Heart right ventricle (tissue), 16 donors: ENCODE measurements at regions of chr4 and their contacts with region 1.

Region 1: GRCh38 chr4:142846729-142847596 is 862 bp upstream of the INPP4B start:
- DNase-seq: peak; percentile 33 to 45
- ATAC-seq: peak; percentile 57 to 84 (median 78)
- H3K4me3 ChIP-seq: peak overlapping the region; percentile 57 to 79 (median 66)
- H3K27ac ChIP-seq: peak overlapping the region; percentile 57 to 93 (median 82)
- H3K4me1 ChIP-seq: peaks cover 0 to 30% (median 10%) of the 10 kb centered on the region in 9 donors
- H3K27me3 ChIP-seq: peaks cover 0 to 55% (median 15%) of the 10 kb centered on the region in 7 donors
- CTCF ChIP-seq: peak in 7 of 9 donors; percentile 33 to 56 (median 50)

Region 2: DNA sequence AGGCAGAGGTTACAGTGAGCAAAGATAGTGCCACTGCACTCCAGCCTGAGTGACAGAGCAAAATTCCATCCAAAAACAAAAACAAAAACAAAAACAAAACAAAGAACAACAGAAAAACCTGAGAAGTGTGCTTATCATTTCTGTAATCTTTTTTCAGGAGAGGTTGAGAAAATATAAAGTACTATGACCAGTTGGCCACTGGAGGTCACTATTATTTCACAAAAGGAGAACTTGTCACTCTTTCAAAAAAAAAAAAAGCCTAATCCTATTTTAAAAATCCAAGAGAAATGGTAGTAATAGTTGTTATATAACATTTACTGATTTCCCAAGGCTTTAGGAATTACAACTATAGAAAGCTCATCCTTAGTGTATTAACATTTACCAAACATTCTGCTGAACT is 1688.7 kb before region 1 on chr4:
- intact Hi-C with region 1: loop called in 3 of 10 experiments (anchors 5 to 10 kb)
- DNase-seq: no peak
- ATAC-seq: peak in 1 of 8 donors; percentile 49
- H3K4me3 ChIP-seq: no peak overlapping the region
- H3K27ac ChIP-seq: no peak overlapping the region
- H3K4me1 ChIP-seq: peaks cover 0 to 13% (median 5%) of the 10 kb centered on the region in 9 donors
- H3K27me3 ChIP-seq: peaks cover 0 to 3% (median 0%) of the 10 kb centered on the region in 7 donors
- CTCF ChIP-seq: peak in 8 of 9 donors; percentile 44 to 69 (median 56)

Region 3: DNA sequence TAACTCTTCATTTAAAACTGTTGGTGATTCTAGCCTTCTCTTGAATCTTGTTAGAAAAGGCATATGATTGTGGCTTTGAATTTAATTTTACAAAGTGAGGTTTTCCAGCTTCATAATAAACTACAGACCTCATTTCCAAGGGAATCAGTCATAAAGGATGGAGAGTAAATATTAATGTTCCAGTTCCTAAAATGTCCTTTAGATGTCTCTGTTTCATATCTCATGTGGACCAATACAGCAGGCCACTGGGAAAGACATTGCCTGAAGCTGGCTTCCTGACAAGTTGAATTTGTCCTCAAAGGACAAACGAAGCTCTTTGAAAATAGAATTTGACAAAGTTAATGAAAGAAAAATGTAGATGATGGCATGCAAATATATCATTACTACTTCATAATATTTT is 1500.8 kb before region 1 on chr4:
- intact Hi-C with region 1: loop called in 1 of 10 experiments (anchors 10 kb)
- DNase-seq: no peak
- ATAC-seq: peak in 7 of 8 donors; percentile 59 to 86 (median 82)
- H3K4me3 ChIP-seq: no peak overlapping the region
- H3K27ac ChIP-seq: no peak overlapping the region
- H3K4me1 ChIP-seq: peaks cover 0 to 24% (median 0%) of the 10 kb centered on the region in 9 donors
- H3K27me3 ChIP-seq: no peaks in the 10 kb centered on the region
- CTCF ChIP-seq: peak; percentile 39 to 74 (median 64)

Region 4: DNA sequence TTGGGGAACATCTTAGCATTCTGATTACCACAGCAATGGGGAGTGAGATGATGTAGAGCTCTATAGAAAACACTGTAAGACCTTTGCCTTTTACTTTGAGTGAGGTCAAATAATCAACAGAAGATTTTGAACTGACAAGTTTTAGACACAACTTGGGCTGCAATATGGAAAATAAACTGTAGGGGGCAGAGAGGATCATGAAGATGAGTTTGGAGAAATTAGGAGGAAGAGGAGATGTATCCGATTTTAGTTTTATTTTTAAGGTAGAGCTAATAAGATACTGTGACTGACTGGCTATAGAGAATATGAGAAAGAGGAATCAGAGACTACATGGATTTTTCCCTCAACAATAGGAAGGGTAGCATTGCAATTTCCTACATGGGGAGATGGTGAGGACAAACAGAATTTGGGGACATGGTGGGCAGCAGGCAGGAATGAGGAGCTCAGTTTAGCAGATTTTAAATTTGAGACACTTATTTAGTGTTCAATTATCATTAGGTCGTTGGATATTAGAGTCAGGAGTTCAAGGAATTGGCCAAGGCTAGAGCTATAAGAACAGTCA is 564.0 kb before region 1 on chr4:
- intact Hi-C with region 1: loop called in 1 of 10 experiments (anchors 10 kb)
- DNase-seq: no peak
- ATAC-seq: no peak
- H3K4me3 ChIP-seq: no peak overlapping the region
- H3K27ac ChIP-seq: no peak overlapping the region
- H3K4me1 ChIP-seq: peaks cover 0 to 13% (median 0%) of the 10 kb centered on the region in 9 donors
- H3K27me3 ChIP-seq: no peaks in the 10 kb centered on the region
- CTCF ChIP-seq: peak; percentile 11 to 65 (median 54)

Region 5: DNA sequence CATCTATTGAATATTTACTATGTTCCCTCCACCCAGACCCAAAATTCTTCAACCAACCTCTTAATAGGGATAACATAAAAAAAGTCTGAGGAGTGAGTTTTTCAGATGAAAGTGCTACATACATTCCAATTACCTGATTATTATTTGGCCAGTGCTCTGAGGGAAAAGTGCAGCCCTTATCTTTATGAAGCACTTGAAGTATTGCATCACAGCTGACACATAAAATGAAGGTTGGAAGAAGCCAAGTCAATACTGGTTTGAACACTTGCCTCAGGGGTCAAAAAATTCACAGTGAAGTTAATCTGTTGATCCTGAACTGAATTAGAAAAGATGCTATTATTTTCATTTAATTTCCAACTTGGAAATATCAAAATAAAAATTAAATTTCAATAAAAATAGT is 499.7 kb before region 1 on chr4:
- intact Hi-C with region 1: loop called in 5 of 10 experiments (anchors 5 to 10 kb)
- DNase-seq: no peak
- ATAC-seq: peak in 5 of 8 donors; percentile 54 to 76 (median 74)
- H3K4me3 ChIP-seq: no peak overlapping the region
- H3K27ac ChIP-seq: peak overlapping the region in 4 of 10 donors; percentile 10 to 68 (median 44)
- H3K4me1 ChIP-seq: peaks cover 2 to 64% (median 44%) of the 10 kb centered on the region in 9 donors
- H3K27me3 ChIP-seq: no peaks in the 10 kb centered on the region
- CTCF ChIP-seq: no peak

Region 6: DNA sequence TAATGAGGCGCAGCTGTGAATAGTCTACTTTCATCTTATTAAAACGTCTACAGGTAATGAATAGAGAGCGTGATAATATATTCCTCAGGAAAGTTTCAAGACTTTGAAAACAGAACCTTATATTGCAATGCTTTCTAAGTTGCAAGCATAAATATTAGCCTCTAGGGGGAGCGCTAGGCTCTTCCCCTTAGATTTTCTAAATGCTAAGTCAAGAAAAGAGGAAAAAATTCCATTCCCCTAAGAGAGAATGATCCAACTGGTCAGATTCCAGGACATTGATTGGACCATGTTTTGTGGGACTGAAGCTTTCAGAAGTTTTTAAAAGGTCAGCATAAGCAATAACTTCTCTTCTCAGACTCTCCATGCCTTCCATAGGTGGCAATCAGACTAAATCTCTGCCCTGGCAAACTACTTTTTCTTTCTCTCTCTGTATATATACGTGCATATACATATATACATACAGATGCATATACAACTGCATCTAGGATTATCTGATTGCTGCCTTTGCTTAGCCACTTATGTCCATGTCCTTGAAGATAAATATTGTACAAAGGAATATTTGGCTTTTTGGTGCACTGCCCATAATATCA is 493.7 kb before region 1 on chr4:
- intact Hi-C with region 1: loop called in 5 of 10 experiments (anchors 5 to 10 kb)
- DNase-seq: peak in 1 of 2 donors; percentile 26
- ATAC-seq: peak in 7 of 8 donors; percentile 36 to 69 (median 48)
- H3K4me3 ChIP-seq: no peak overlapping the region
- H3K27ac ChIP-seq: peak overlapping the region in 6 of 10 donors; percentile 21 to 68 (median 34)
- H3K4me1 ChIP-seq: peaks cover 2 to 80% (median 67%) of the 10 kb centered on the region in 9 donors
- H3K27me3 ChIP-seq: no peaks in the 10 kb centered on the region
- CTCF ChIP-seq: peak; percentile 84 to 96 (median 90)

Region 7: GRCh38 chr4:142883040-142883832 is 36.3 kb after region 1 on chr4:
- intact Hi-C with region 1: no loop called
- DNase-seq: no peak
- ATAC-seq: peak in 1 of 8 donors; percentile 48
- H3K4me3 ChIP-seq: no peak overlapping the region
- H3K27ac ChIP-seq: no peak overlapping the region
- H3K4me1 ChIP-seq: no peaks in the 10 kb centered on the region
- H3K27me3 ChIP-seq: no peaks in the 10 kb centered on the region
- CTCF ChIP-seq: peak; percentile 14 to 56 (median 44)